HEK293 (cell line): ENCODE measurements at regions of chr13 and their contacts with region 1.

Region 1: GRCh38 chr13:20828539-20829364 is 55.0 kb upstream of the EEF1AKMT1 start:
- H3K4me3 ChIP-seq: no peak overlapping the region
- H3K27ac ChIP-seq: no peak overlapping the region
- H3K4me1 ChIP-seq: peaks cover 8% of the 10 kb centered on the region
- CTCF ChIP-seq: peak; percentile 12; the same call in 1 of the 2 replicates

Region 2: GRCh38 chr13:20370815-20371406 is 457.8 kb before region 1 on chr13:
- CTCF ChIA-PET with region 1: no interaction called
- POLR2A ChIA-PET with region 1: no interaction called
- H3K4me3 ChIP-seq: no peak overlapping the region
- H3K27ac ChIP-seq: no peak overlapping the region
- H3K4me1 ChIP-seq: no peaks in the 10 kb centered on the region
- CTCF ChIP-seq: no peak

Region 3: GRCh38 chr13:20495082-20496023 is 333.4 kb before region 1 on chr13:
- CTCF ChIA-PET with region 1: interaction called, 45 read pairs
- POLR2A ChIA-PET with region 1: no interaction called
- H3K4me3 ChIP-seq: no peak overlapping the region
- H3K27ac ChIP-seq: no peak overlapping the region
- H3K4me1 ChIP-seq: no peaks in the 10 kb centered on the region
- CTCF ChIP-seq: peak; percentile 43

Region 4: DNA sequence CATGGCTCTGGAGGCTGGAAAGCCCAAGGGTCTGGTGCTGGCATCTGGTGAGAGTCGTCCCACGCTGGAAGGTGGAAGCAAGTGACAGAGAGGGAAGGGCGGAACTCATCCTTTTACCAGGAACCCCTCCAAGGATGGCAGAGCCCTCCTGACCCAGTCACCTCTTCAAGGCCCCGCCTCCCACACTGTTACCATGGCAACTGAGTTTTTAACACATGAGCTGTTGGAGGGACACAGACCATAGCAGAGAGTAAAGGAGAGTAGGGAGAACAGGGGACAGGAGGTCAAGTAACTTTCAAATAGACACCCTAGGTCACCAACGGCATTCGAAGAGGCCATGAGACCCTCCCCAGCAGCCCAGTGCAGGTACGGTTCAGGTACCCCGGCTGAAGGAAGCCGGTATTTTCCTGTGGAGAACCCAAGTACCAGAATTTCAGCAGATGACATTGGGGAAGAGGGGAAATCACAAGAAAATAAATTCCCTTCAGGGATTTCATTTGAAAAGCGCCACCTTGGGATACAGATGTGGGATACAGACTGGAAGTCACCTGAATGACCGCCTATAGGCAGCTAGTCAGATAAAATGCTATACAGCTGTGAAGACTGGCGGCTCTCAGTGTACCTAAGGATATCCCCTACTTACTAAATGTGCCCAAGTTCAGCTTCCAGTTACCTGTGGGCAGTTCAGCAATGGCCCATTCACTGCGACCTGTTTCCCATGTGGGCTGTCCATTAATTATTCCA is 117.3 kb before region 1 on chr13:
- CTCF ChIA-PET with region 1: interaction called, 15 read pairs
- POLR2A ChIA-PET with region 1: no interaction called
- H3K4me3 ChIP-seq: no peak overlapping the region
- H3K27ac ChIP-seq: no peak overlapping the region
- H3K4me1 ChIP-seq: no peaks in the 10 kb centered on the region
- CTCF ChIP-seq: no peak

Region 5: GRCh38 chr13:20815469-20815868 is 13.3 kb before region 1 on chr13:
- CTCF ChIA-PET with region 1: interaction called, 29 read pairs
- POLR2A ChIA-PET with region 1: no interaction called
- H3K4me3 ChIP-seq: no peak overlapping the region
- H3K27ac ChIP-seq: no peak overlapping the region
- H3K4me1 ChIP-seq: peaks cover 12% of the 10 kb centered on the region; the same call in 1 of the 2 replicates
- CTCF ChIP-seq: no peak

Region 6: DNA sequence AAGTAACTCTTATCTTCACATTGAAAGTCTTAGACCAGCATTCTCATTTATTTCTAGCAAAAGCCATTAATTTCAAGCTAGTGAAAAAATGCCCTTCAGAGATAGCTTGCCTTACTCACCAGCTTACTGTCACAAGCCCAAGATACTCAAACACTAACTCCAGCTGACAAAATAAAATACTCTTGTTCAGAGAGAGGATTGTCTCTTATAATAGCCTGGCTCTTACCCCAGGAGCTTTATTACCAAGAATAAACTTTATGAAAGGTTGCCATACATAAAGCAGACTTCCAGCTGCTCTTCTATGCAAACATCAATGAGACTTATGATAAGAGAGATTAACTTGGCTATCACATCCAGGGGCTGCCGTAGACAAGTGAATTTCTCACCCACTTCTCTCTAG is 20.2 kb after region 1 on chr13:
- CTCF ChIA-PET with region 1: no interaction called
- POLR2A ChIA-PET with region 1: no interaction called
- H3K4me3 ChIP-seq: no peak overlapping the region
- H3K27ac ChIP-seq: no peak overlapping the region
- H3K4me1 ChIP-seq: peaks cover 10% of the 10 kb centered on the region
- CTCF ChIP-seq: no peak

Region 7: DNA sequence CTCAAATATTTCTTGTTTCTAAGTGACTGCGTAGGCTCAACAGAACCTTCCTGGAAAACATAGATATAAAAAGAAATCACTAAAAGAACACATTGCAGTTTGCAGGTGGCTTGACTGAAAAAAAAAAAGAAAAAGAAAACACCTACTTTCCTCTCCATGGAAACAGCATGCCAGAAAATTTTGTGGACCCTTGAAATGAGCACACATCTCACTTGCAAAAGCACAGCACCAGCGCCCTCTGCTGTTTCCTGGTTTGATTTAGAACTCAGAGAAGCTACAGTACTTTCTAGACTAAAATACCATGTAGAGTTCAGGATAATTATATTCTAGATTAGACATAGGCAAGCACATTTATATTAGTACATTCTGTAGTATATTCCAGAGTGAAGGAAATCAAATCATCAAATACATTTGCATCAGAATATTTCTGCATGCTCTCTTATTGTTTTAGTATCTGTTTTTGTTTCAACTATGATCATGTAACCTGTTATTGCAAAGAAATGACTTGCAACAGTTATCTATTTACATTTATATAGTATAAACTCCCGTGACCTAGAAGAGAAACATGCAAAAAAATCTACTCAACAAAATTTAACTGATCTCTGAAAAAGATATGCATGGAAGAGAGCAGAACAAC is 96.1 kb after region 1 on chr13:
- CTCF ChIA-PET with region 1: interaction called, 11 read pairs
- POLR2A ChIA-PET with region 1: no interaction called
- H3K4me3 ChIP-seq: no peak overlapping the region
- H3K27ac ChIP-seq: no peak overlapping the region
- H3K4me1 ChIP-seq: no peaks in the 10 kb centered on the region
- CTCF ChIP-seq: peak; percentile 40; the same call in 1 of the 2 replicates